Activated CD4-positive, alpha-beta T cell treated with anti-CD3 and anti-CD28 coated beads, Interleukin-2, amount 10 ng/mL, durations not matched to agents 24 days and 14 days (primary cell): ENCODE measurements at regions of chr13 and their contacts with region 1.

Region 1: GRCh38 chr13:21297914-21298831 is 121.7 kb downstream of the MRPL57 start:
- DNase-seq: peak; percentile 96
- H3K4me3 Mint-ChIP-seq: peak overlapping the region; percentile 95
- H3K27ac Mint-ChIP-seq: peak overlapping the region; percentile 92
- H3K4me1 Mint-ChIP-seq: peaks cover 26% of the 10 kb centered on the region
- H3K27me3 Mint-ChIP-seq: no peaks in the 10 kb centered on the region

Region 2: GRCh38 chr13:21111546-21111945 is 186.6 kb before region 1 on chr13:
- intact Hi-C with region 1: loop called (anchors 5 kb)
- DNase-seq: no peak
- H3K4me3 Mint-ChIP-seq: no peak overlapping the region
- H3K27ac Mint-ChIP-seq: no peak overlapping the region
- H3K4me1 Mint-ChIP-seq: no peaks in the 10 kb centered on the region
- H3K27me3 Mint-ChIP-seq: no peaks in the 10 kb centered on the region

Region 3: GRCh38 chr13:21316376-21316775 is 18.2 kb after region 1 on chr13:
- intact Hi-C with region 1: loop called (anchors 1 kb)
- DNase-seq: no peak
- H3K4me3 Mint-ChIP-seq: peak overlapping the region; percentile 40
- H3K27ac Mint-ChIP-seq: peak overlapping the region; percentile 83
- H3K4me1 Mint-ChIP-seq: peaks cover 11% of the 10 kb centered on the region
- H3K27me3 Mint-ChIP-seq: no peaks in the 10 kb centered on the region

Region 4: DNA sequence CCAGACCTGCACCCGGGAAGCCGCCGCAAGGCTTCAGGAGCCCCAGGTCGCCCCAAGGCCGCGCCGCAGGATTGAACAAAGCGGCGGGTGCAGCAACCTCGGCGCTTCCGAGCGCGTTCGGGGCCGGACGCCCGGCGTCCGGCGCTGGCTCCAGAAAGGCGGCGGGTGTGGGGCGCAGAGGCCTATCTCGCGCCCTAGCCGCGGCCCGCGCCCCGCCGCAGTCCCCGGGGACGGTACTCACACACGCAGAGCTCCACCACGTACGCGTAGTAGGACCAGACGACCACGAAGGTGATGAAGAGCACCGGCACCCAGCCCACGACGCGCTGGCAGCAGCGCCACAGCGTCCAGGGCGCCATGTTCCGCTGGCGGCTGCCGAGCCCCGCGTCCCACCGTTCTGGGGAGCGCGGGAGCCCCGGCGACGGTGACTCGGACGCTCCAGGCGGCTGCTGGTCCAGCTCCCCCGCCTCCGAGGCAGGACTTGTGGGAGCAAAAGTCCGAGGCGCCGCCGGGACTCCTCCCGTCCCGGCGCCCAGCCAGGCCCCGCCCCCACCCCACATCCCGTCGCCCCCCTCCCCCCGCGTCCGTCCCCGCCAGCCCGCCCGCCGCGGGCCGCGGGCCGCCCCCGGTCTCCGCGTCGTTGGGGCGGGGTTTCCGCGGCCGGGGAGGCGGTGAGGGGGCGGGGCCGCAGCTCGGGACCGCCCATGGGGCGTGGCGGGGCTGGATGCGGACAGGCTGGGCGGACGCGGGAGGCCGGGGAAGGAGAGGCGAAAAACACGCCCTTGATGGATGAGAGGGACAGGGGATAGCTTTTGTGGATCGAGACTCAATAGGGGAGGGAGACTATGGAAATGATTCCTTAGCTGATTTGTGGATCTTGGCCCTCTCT is 160.9 kb after region 1 on chr13 and contains the start of gene ZDHHC20:
- intact Hi-C with region 1: loop called (anchors 1 kb)
- DNase-seq: peak; percentile 98
- H3K4me3 Mint-ChIP-seq: peak within 1 kb of the TSS; percentile 94
- H3K27ac Mint-ChIP-seq: peak within 1 kb of the TSS; percentile 93
- H3K4me1 Mint-ChIP-seq: peaks cover 27% of the 10 kb centered on the region
- H3K27me3 Mint-ChIP-seq: no peaks in the 10 kb centered on the region
- total RNA-seq, gene ZDHHC20: 64.7 and 65.4 TPM in 2 replicates

Region 5: GRCh38 chr13:21603531-21604448 is 305.6 kb after region 1 on chr13 and contains the start of gene MICU2:
- intact Hi-C with region 1: loop called (anchors 2 kb)
- DNase-seq: peak; percentile 99
- H3K4me3 Mint-ChIP-seq: peak within 1 kb of the TSS; percentile 89
- H3K27ac Mint-ChIP-seq: peak within 1 kb of the TSS; percentile 89
- H3K4me1 Mint-ChIP-seq: peaks cover 25% of the 10 kb centered on the region
- H3K27me3 Mint-ChIP-seq: peaks cover 22% of the 10 kb centered on the region
- total RNA-seq, gene MICU2: 34.2 and 35.0 TPM in 2 replicates

Region 6: GRCh38 chr13:22993148-22993547 is 1695.0 kb after region 1 on chr13:
- intact Hi-C with region 1: no loop called
- DNase-seq: no peak
- H3K4me3 Mint-ChIP-seq: no peak overlapping the region
- H3K27ac Mint-ChIP-seq: no peak overlapping the region
- H3K4me1 Mint-ChIP-seq: no peaks in the 10 kb centered on the region
- H3K27me3 Mint-ChIP-seq: no peaks in the 10 kb centered on the region